Activated CD4-positive, alpha-beta T cell treated with anti-CD3 and anti-CD28 coated beads, Interleukin-2, amount 10 ng/mL, durations not matched to agents 24 days and 14 days (primary cell): ENCODE measurements at regions of chr2 and their contacts with region 1.

Region 1: GRCh38 chr2:76599732-76600368 is 889.1 kb upstream of the GCFC2 start:
- DNase-seq: peak; percentile 72
- H3K4me3 Mint-ChIP-seq: no peak overlapping the region
- H3K27ac Mint-ChIP-seq: no peak overlapping the region
- H3K4me1 Mint-ChIP-seq: no peaks in the 10 kb centered on the region
- H3K27me3 Mint-ChIP-seq: no peaks in the 10 kb centered on the region

Region 2: GRCh38 chr2:75787532-75788132 is 812.2 kb before region 1 on chr2:
- intact Hi-C with region 1: loop called (anchors 5 kb)
- DNase-seq: no peak
- H3K4me3 Mint-ChIP-seq: no peak overlapping the region
- H3K27ac Mint-ChIP-seq: no peak overlapping the region
- H3K4me1 Mint-ChIP-seq: no peaks in the 10 kb centered on the region
- H3K27me3 Mint-ChIP-seq: peaks cover 1% of the 10 kb centered on the region

Region 3: DNA sequence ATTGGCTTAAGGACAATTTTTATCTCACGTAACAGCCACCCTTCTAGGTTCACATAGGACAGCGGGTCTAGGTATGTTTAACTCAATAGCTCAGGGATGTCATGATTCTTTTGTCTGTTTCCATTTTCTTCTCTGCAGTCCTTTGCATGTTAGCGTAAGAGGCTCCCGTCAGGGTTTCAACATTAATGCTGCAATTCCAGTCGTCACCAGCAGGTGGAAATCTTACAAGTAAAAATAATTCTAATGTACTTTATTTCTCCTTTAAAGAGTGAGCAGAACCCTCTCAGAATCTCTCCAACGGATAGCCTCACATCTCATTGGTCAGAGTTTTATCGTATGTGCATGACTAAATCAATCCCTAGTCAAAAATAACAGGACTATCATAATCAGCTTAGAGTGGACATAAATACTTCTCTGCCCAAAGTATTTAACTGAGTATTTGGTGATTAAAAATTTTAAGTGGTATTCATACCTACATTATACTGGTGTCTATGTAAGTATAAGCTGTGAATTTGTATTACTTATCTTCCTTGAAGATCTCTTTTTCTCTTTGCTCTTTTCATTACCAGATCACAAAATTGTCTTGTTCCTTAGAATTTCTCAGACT is 401.9 kb before region 1 on chr2:
- intact Hi-C with region 1: loop called (anchors 2 kb)
- DNase-seq: peak; percentile 80
- H3K4me3 Mint-ChIP-seq: no peak overlapping the region
- H3K27ac Mint-ChIP-seq: no peak overlapping the region
- H3K4me1 Mint-ChIP-seq: no peaks in the 10 kb centered on the region
- H3K27me3 Mint-ChIP-seq: no peaks in the 10 kb centered on the region

Region 4: GRCh38 chr2:76625101-76625500 is 25.3 kb after region 1 on chr2:
- intact Hi-C with region 1: no loop called
- DNase-seq: no peak
- H3K4me3 Mint-ChIP-seq: no peak overlapping the region
- H3K27ac Mint-ChIP-seq: no peak overlapping the region
- H3K4me1 Mint-ChIP-seq: no peaks in the 10 kb centered on the region
- H3K27me3 Mint-ChIP-seq: no peaks in the 10 kb centered on the region